ENCODE measurements at regions of chr1 and their contacts with region 1.

Region 1: DNA sequence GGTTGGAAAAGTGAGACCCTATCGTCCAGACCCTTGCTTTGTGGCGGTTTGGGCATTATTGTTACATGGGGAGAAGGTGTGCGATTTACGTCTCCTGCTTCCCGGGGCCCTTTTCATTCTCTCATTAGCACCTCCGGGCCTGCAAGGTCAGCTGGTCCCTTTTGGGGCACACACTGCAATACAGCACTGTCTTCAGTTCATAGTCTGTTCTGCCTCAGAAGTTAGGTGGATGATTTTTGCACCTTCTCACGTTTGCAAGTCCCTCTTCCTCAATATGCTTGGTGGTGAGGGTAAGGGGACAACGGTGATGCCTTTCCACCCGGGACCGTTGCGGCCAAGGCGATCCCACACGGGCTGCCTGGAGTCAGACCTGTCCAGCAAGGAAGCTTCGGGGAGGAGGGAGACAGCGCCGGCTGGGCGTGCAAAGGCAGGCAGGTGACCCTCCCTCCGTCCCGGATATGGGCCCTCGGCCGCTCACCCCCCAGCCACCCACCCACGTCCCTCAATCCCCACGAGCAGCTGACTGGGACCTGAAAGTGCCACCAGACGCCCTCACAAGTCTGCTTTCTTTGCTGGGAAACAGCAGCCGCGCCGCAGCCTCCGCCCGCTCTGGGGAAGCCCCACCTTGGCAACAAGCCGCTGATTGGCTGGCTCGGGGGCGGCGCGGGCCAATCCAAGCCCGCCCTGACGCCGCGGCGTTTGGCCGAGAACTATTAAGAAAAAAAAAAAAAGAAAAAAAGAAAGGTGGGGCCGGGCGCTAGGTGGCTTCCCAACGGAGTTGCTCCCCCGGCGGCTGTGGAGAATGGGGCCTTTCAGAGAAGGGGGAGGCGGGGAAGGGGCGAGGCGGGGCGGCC is 21.7 kb downstream of the BTG2 start:
- DNase-seq: peak; percentile 93
- H3K4me3 Mint-ChIP-seq: peak overlapping the region; percentile 78
- H3K27ac Mint-ChIP-seq: peak overlapping the region; percentile 96
- H3K4me1 Mint-ChIP-seq: peaks cover 62% of the 10 kb centered on the region
- H3K27me3 Mint-ChIP-seq: no peaks in the 10 kb centered on the region

Region 2: DNA sequence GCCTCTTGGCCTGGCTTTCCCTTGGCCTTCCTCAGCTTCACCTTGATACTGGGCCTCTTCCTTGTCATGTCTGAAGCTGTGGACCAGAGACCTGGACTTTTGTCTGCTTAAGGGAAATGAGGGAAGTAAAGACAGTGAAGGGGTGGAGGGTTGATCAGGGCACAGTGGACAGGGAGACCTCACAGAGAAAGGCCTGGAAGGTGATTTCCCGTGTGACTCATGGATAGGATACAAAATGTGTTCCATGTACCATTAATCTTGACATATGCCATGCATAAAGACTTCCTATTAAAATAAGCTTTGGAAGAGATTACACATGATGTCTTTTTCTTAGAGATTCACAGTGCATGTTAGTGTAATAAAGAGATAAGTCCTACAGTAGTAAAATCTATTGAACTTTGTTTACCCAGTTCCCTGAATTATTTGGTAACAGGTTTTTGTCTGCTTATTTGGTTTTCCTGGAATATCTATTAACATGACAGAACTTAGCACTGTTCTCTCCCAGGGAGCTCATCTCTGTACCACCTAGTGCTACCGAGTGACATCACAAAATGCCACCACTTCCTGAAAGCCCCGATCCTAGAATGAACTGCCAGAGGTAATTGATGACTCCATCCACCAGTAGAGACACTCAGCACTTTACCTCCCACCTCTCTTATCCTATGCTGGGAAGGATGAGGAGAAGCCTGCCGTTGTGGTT is 1007.5 kb before region 1 on chr1:
- intact Hi-C with region 1: no loop called
- DNase-seq: no peak
- H3K4me3 Mint-ChIP-seq: no peak overlapping the region
- H3K27ac Mint-ChIP-seq: no peak overlapping the region
- H3K4me1 Mint-ChIP-seq: no peaks in the 10 kb centered on the region
- H3K27me3 Mint-ChIP-seq: peaks cover 14% of the 10 kb centered on the region

Region 3: GRCh38 chr1:203273206-203273868 is 53.7 kb before region 1 on chr1:
- intact Hi-C with region 1: loop called (anchors 1 kb)
- DNase-seq: peak; percentile 84
- H3K4me3 Mint-ChIP-seq: peak overlapping the region; percentile 50
- H3K27ac Mint-ChIP-seq: peak overlapping the region; percentile 69
- H3K4me1 Mint-ChIP-seq: peaks cover 57% of the 10 kb centered on the region
- H3K27me3 Mint-ChIP-seq: no peaks in the 10 kb centered on the region

Region 4: DNA sequence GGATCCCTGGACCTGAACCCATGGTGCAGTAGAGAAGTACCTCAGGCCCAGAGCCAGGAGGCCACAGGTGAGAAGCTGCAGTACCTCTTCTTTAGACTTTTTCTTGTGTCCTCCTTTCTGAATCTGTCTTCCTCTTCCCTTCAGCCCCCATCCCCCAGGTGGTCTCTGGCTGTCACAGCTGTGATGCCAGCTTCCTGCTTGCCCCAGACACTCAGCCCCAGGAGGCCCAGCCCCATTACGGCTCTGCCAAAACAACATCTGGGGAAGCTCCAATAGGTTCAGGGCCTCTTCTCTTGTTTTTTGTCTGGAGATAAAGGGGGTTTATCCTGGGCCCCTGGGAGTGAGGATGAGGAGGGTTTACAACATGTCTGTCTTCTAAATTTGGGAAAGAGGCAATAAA is 31.3 kb before region 1 on chr1:
- intact Hi-C with region 1: no loop called
- DNase-seq: no peak
- H3K4me3 Mint-ChIP-seq: no peak overlapping the region
- H3K27ac Mint-ChIP-seq: no peak overlapping the region
- H3K4me1 Mint-ChIP-seq: peaks cover 53% of the 10 kb centered on the region
- H3K27me3 Mint-ChIP-seq: no peaks in the 10 kb centered on the region

Region 5: DNA sequence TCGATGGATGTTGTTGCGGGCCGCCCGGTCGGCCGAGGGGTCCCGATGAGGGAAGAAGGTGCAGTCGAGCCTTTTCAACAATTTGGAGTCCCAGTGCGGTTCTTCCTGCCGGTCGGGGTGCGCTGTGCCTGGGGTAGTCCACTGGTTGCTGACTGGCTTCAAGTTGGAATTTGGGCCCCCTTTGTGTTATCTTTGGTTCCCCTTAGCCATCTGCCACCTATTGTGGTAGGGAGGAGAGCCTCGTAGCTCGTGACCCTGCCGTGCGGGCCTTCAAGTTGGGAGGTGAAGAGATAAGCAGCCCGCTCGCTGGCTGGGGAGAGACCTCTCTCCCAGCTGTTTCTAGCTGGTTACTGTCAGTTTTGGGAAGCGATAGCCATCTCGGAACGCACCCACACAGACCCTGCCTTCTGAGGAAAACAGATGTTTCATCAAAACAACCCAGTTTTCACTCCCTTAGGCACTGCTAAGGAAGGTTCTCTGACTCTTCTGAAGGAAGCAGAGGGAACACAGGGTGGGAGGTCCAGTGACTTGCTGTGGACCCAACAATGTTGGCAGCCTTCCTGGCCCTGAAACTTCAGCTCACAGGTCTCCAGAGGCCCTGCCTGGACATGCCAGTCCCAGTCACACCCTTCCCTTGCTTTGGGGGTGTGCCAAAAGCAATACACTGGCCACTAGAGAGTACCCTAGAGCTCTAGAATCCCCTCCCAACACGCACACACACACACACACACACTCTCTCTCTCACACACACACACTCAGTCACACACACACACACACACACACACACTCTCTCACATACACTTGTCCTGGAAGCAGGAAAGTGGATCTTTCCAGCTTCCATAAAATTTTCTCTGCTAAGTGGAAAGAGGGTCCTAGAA is 20.7 kb before region 1 on chr1:
- intact Hi-C with region 1: loop called (anchors 1 kb)
- DNase-seq: peak; percentile 41
- H3K4me3 Mint-ChIP-seq: peak overlapping the region; percentile 99
- H3K27ac Mint-ChIP-seq: peak overlapping the region; percentile 87
- H3K4me1 Mint-ChIP-seq: peaks cover 54% of the 10 kb centered on the region
- H3K27me3 Mint-ChIP-seq: no peaks in the 10 kb centered on the region

Region 6: DNA sequence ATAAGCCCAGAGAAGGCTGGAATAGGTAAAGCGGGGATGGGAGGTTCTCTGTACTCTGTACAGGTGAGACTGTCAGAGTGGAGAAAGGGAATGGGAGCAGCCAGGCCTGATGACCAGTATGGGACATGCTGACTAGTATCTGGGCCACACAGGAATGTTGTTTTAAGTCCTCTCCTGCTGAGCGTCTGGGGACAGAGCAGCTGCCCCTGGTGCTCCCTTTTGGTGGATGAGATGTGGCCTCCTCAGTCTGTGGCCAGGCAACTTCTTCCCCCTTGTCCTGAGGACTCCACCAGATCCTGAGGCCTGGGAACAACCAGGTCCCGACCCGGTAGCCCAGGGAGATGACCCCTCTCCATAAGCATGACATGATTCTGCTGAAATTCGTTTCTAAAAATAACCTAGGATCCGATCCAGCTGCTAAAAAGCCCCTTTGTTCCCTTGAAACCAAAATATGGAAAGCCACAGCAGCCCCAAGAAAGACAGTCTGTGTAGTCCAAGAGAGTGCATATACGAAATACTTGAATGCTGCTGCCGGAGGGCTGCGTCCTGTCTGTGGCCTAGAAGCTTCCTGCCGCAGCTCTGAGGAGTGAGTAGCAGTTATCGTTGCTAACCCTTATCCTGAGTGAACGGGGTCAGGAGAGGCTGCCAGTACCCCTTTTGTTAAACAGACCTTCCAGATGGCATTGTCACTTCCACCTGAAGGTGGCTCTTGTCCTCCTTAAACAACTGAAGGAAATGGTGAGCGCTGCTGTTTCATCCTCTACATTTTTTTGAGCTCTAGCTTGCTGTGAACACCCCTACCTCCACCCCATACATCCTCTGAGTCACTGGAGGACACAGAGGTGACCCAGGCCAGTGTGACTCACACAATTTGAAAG is 346.7 kb after region 1 on chr1:
- intact Hi-C with region 1: loop called (anchors 2 kb)
- DNase-seq: peak; percentile 73
- H3K4me3 Mint-ChIP-seq: peak overlapping the region; percentile 69
- H3K27ac Mint-ChIP-seq: peak overlapping the region; percentile 94
- H3K4me1 Mint-ChIP-seq: peaks cover 55% of the 10 kb centered on the region
- H3K27me3 Mint-ChIP-seq: no peaks in the 10 kb centered on the region

Region 7: DNA sequence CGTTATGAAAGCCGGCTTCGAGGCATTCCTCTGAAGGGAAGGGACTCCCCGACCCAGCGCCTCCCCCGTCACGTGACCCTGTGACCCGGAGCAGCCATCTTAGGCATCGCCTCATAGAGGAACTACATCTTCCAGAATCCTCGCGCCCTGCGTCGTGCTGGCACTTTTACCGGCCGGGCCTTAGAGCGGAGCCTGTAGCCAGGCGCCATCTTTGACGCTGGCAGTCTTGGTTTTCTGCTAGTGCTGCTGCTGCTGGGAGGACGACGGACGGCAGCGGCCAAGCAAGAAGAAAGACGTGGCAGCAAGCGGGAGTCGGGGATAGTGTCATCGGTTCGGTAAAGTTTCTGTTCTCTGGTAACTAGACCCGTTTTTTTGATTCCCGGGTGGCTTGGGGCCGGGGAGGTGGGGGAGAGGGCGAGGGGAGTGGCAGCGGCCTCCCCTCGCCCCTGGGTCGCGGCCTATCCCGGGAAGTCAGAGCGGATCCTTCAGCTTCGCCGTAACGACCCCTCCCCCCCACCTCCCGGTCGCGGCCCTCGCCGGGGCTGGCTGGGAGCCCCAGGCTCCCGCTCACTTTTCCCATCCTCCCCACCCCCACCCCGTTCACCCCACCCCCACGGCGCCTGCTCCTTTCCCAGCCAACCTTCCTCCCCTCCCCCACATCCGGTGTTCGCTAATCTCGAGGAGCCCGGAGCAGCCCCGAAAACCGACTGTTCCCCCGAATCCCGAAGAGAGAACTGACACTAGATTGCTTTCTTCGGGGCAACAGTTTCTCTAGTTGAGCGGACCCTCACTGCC is 468.6 kb after region 1 on chr1 and contains the starts of genes ZBED6 and ZC3H11A:
- intact Hi-C with region 1: loop called (anchors 10 kb)
- DNase-seq: peak; percentile 98
- H3K4me3 Mint-ChIP-seq: peak within 1 kb of the TSS; percentile 99
- H3K27ac Mint-ChIP-seq: peak within 1 kb of the TSS; percentile 99
- H3K4me1 Mint-ChIP-seq: peaks cover 42% of the 10 kb centered on the region
- H3K27me3 Mint-ChIP-seq: no peaks in the 10 kb centered on the region
- total RNA-seq, gene ZBED6: 21.9 and 22.2 TPM in 2 replicates
- total RNA-seq, gene ZC3H11A: 82.8 and 86.6 TPM in 2 replicates

Measured in activated T-helper 2 cell treated with anti-CD3 and anti-CD28 coated beads, Interferon-gamma antibody, Interleukin-2, Interleukin-4, amounts not matched to agents 10 μg/mL and 5 μg/mL and 100 μg/mL, durations not matched to agents 14 hours and 24 hours and 36 hours (primary cell).